ENCODE measurements at regions of chr12 and their contacts with region 1.

Region 1: DNA sequence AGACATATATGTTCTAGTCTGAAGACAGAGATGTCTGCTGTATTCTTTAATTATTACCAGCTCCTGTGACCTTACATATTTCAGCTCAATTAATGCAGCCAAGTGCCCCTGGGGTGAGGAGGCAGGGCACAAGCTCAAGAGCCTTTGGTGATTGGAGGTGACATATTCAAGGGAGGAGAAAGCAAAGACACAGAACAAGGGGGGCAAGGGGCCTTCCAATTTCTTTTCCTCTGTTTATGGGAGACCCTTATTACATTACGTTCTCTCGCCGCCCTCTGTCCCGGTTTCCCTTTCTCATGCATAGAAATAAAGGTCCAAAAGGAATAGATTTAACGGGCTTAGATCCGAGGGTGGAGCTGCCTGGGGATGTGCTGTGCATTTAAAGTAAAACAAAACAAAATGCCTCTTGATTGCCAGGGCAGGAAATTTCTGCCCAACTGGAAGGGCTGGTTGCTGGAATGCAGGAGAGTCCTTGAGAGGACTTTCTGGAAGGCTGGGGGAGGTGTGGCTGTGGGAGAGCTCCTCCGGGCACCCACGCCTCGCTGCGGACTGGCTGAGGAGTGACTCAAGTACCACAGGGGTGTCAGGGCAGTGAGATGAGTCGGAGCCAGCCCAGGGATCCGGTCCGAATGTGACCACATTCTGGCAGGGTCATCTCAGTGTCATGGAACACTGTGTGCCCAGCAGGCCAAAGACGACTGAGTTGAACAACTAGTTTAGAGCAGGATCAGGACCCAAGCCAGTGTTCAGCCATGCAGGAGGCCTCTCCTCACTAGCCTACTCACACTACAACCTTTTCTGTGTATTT is 32.1 kb upstream of the GSG1 start:
- DNase-seq: peak; percentile 94
- H3K4me3 Mint-ChIP-seq: peak overlapping the region; percentile 67
- H3K27ac Mint-ChIP-seq: peak overlapping the region; percentile 76
- H3K4me1 Mint-ChIP-seq: peaks cover 41% of the 10 kb centered on the region
- H3K27me3 Mint-ChIP-seq: no peaks in the 10 kb centered on the region
- CTCF ChIP-seq: peak; percentile 19

Region 2: GRCh38 chr12:12975322-12976077 is 160.1 kb before region 1 on chr12:
- CTCF ChIA-PET with region 1: no interaction called
- POLR2A ChIA-PET with region 1: no interaction called
- intact Hi-C with region 1: no loop called
- DNase-seq: peak; percentile 55
- H3K4me3 Mint-ChIP-seq: no peak overlapping the region
- H3K27ac Mint-ChIP-seq: peak overlapping the region; percentile 85
- H3K4me1 Mint-ChIP-seq: peaks cover 12% of the 10 kb centered on the region
- H3K27me3 Mint-ChIP-seq: no peaks in the 10 kb centered on the region
- CTCF ChIP-seq: peak; percentile 23

Region 3: GRCh38 chr12:13023811-13024530 is 111.6 kb before region 1 on chr12:
- CTCF ChIA-PET with region 1: no interaction called
- POLR2A ChIA-PET with region 1: no interaction called
- intact Hi-C with region 1: no loop called
- DNase-seq: no peak
- H3K4me3 Mint-ChIP-seq: no peak overlapping the region
- H3K27ac Mint-ChIP-seq: no peak overlapping the region
- H3K4me1 Mint-ChIP-seq: no peaks in the 10 kb centered on the region
- H3K27me3 Mint-ChIP-seq: no peaks in the 10 kb centered on the region
- CTCF ChIP-seq: no peak

Region 4: GRCh38 chr12:13094347-13094746 is 41.2 kb before region 1 on chr12:
- CTCF ChIA-PET with region 1: interaction called, 64 read pairs
- POLR2A ChIA-PET with region 1: interaction called, 117 read pairs
- intact Hi-C with region 1: loop called (anchors 1 kb)
- DNase-seq: peak; percentile 40
- H3K4me3 Mint-ChIP-seq: peak overlapping the region; percentile 26
- H3K27ac Mint-ChIP-seq: peak overlapping the region; percentile 80
- H3K4me1 Mint-ChIP-seq: peaks cover 47% of the 10 kb centered on the region
- H3K27me3 Mint-ChIP-seq: no peaks in the 10 kb centered on the region
- CTCF ChIP-seq: no peak

Region 5: DNA sequence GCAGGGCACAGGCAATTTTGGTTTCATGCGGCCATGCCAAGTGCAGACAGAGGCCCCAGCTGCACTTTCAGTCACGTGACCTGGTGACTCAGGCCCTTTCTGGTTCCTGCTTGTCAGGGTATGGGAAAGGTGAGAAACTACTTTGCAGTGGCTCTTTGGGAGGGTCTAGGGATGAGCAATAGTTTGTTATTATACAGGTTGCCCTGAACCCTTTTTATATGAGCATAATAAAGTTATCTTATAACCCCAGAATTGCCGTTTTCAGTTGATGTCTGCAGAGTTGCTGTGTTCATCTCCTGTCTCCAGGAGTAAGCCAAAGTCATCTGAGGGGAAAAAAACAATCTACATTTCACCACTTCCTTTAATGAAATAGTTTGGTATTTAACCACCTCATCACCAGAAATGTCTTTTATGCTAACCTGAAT is 30.1 kb after region 1 on chr12:
- CTCF ChIA-PET with region 1: interaction called, 10 read pairs
- POLR2A ChIA-PET with region 1: interaction called, 9 read pairs
- intact Hi-C with region 1: loop called (anchors 5 kb)
- DNase-seq: peak; percentile 98
- H3K4me3 Mint-ChIP-seq: no peak overlapping the region
- H3K27ac Mint-ChIP-seq: peak overlapping the region; percentile 60
- H3K4me1 Mint-ChIP-seq: peaks cover 25% of the 10 kb centered on the region
- H3K27me3 Mint-ChIP-seq: no peaks in the 10 kb centered on the region
- CTCF ChIP-seq: no peak

Region 6: GRCh38 chr12:13179211-13180074 is 43.9 kb after region 1 on chr12:
- CTCF ChIA-PET with region 1: interaction called, 16 read pairs
- POLR2A ChIA-PET with region 1: interaction called, 63 read pairs
- intact Hi-C with region 1: loop called (anchors 5 kb)
- DNase-seq: peak; percentile 64
- H3K4me3 Mint-ChIP-seq: peak overlapping the region; percentile 49
- H3K27ac Mint-ChIP-seq: peak overlapping the region; percentile 69
- H3K4me1 Mint-ChIP-seq: peaks cover 24% of the 10 kb centered on the region
- H3K27me3 Mint-ChIP-seq: no peaks in the 10 kb centered on the region
- CTCF ChIP-seq: no peak

Region 7: GRCh38 chr12:13376627-13377373 is 241.2 kb after region 1 on chr12:
- CTCF ChIA-PET with region 1: no interaction called
- POLR2A ChIA-PET with region 1: no interaction called
- intact Hi-C with region 1: no loop called
- DNase-seq: no peak
- H3K4me3 Mint-ChIP-seq: no peak overlapping the region
- H3K27ac Mint-ChIP-seq: no peak overlapping the region
- H3K4me1 Mint-ChIP-seq: peaks cover 5% of the 10 kb centered on the region
- H3K27me3 Mint-ChIP-seq: peaks cover 3% of the 10 kb centered on the region
- CTCF ChIP-seq: no peak

Measured in MCF 10A (cell line).